IMR-90 (cell line): ENCODE measurements at regions of chr11 and their contacts with region 1.

Region 1: GRCh38 chr11:34002268-34002807 is 49.2 kb upstream of the CAPRIN1 start:
- DNase-seq: no peak
- ATAC-seq: no peak
- H3K4me3 ChIP-seq: no peak overlapping the region
- H3K27ac ChIP-seq: no peak overlapping the region
- H3K4me1 ChIP-seq: no peaks in the 10 kb centered on the region
- H3K27me3 ChIP-seq: peaks cover 33% of the 10 kb centered on the region
- CTCF ChIP-seq: no peak
- POLR2A ChIP-seq: no peak
- RAD21 ChIP-seq: no peak

Region 2: DNA sequence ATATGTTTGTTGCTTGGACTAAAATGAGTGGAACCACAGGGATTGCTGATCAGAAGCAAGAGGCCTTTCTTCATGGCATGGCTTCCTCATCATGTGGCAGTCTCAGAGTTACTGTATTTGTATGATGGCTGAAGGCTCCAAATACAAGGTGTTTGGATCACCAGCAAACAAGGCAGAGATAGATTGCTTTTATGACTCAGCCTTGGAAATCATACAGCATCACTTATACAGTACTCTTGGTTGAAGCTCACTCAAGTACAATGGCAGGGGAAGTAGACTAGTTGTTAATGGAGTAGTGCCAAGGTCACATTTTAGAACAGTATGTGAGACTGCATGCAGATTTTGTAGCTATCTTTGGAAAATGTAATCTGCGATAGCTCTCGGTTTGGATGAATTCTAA is 65.8 kb after region 1 on chr11:
- CTCF ChIA-PET with region 1: no interaction called
- POLR2A ChIA-PET with region 1: no interaction called
- dilution Hi-C with region 1: no loop called
- in situ Hi-C with region 1: loop called (anchors 10 kb)
- intact Hi-C with region 1: no loop called
- DNase-seq: peak; percentile 64
- ATAC-seq: peak; percentile 66
- H3K4me3 ChIP-seq: no peak overlapping the region
- H3K27ac ChIP-seq: no peak overlapping the region
- H3K4me1 ChIP-seq: 0 out of 2 replicates have a peak, but pooled peaks cover 9% of the 10 kb centered on the region
- H3K27me3 ChIP-seq: no peaks in the 10 kb centered on the region
- CTCF ChIP-seq: no peak
- POLR2A ChIP-seq: no peak
- RAD21 ChIP-seq: no peak